ENCODE measurements at regions of chr9 and their contacts with region 1.

Region 1: GRCh38 chr9:137590462-137591383 is at the start of gene ZMYND19:
- H3K4me3 ChIP-seq: peak within 1 kb of the TSS; percentile 75
- H3K27ac ChIP-seq: peak within 1 kb of the TSS; percentile 75; the same call in 1 of the 2 replicates
- H3K4me1 ChIP-seq: peaks cover 2% of the 10 kb centered on the region; the same call in 1 of the 2 replicates
- CTCF ChIP-seq: peak; percentile 25

Region 2: DNA sequence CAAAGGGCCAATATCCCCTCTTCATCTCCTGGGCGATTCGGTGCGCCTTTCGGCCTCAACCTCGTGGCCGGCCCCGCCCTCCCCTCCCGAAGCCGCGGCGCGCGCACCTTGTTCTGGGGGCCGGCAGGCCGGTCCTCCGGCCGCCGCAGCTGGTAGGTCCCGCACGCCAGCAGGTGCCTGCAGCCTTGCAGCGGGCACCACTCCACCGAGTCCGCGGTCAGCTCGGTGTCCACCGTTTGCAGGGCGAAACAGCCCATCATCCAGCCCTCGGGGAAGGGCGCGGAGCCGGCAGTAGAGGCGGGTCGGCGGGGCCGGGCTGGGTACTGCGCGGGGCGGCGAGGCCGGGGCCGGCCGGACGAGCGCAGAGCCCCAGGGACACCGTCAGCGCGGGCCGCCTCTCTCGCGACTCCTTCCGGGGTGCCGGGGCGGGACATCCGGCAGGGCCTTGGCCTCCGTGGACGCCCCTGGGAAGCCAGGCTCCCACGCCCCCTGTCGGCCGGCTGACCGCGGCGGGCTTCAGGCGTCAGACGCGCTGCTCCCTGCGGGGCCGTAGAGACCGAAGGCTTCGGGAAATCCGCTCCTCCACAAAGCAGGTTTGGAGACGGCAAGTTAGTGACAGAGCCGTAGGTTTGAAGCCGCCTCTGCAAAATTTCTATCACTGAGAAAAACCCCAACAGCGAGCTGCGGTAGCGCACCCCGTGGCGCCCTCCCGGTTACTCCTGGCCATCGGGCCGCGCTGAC is 12.0 kb before region 1 on chr9 and contains the start of gene DPH7:
- CTCF ChIA-PET with region 1: interaction called, 24 read pairs
- POLR2A ChIA-PET with region 1: interaction called, 26 read pairs
- H3K4me3 ChIP-seq: peak within 1 kb of the TSS; percentile 95
- H3K27ac ChIP-seq: peak within 1 kb of the TSS; percentile 84
- H3K4me1 ChIP-seq: no peaks in the 10 kb centered on the region; the same call in 1 of the 2 replicates
- CTCF ChIP-seq: peak; percentile 97

Region 3: DNA sequence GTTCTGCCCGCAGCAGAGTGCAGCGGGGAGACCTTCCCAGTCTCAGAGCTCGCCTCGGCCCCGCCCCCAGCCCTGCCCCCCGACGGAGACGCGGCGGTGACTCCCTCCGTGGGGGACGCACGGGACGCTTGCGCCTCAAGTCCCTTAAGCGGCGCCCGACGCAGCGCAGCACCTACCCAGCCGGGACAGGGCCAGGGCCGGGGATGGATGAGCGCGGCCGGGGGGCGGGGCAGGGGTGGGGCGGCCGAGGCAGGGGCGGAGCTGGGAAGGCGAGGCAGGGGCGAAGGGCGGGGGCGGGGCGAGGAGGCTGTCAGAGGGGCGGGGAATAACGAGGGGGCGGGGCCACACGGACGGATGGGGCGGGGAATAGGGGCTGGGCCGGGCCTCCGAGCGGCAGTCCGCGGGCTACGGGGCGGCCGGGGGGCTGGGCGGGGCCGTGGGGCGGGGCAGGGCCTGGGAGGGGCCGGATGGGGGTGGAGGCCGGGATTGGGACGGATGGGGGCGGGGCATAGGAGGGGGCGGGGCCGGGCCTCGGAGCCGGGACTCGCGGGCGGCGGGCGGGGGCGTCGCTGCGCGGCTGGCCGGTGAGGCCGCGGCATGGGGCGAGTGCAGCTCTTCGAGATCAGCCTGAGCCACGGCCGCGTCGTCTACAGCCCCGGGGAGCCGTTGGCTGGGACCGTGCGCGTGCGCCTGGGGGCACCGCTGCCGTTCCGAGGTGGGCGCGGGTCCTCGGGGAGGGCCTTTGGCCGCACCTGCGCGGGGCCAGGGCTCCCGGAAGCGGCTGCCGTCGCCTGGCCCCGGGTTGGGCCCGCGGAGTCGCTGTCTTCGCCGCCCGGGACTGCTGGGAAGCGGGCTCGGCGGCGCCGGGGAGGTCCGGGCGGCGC is 14.6 kb after region 1 on chr9 and contains the start of gene ARRDC1:
- CTCF ChIA-PET with region 1: interaction called, 3 read pairs
- POLR2A ChIA-PET with region 1: interaction called, 43 read pairs
- H3K4me3 ChIP-seq: peak within 1 kb of the TSS; percentile 66
- H3K27ac ChIP-seq: peak within 1 kb of the TSS; percentile 72; the same call in 1 of the 2 replicates
- H3K4me1 ChIP-seq: no peaks in the 10 kb centered on the region
- CTCF ChIP-seq: no peak

Region 4: GRCh38 chr9:137611623-137612463 is 21.1 kb after region 1 on chr9:
- CTCF ChIA-PET with region 1: interaction called, 3 read pairs
- POLR2A ChIA-PET with region 1: interaction called, 11 read pairs
- H3K4me3 ChIP-seq: no peak overlapping the region
- H3K27ac ChIP-seq: peak overlapping the region; percentile 52
- H3K4me1 ChIP-seq: peaks cover 6% of the 10 kb centered on the region; the same call in 1 of the 2 replicates
- CTCF ChIP-seq: no peak

Region 5: DNA sequence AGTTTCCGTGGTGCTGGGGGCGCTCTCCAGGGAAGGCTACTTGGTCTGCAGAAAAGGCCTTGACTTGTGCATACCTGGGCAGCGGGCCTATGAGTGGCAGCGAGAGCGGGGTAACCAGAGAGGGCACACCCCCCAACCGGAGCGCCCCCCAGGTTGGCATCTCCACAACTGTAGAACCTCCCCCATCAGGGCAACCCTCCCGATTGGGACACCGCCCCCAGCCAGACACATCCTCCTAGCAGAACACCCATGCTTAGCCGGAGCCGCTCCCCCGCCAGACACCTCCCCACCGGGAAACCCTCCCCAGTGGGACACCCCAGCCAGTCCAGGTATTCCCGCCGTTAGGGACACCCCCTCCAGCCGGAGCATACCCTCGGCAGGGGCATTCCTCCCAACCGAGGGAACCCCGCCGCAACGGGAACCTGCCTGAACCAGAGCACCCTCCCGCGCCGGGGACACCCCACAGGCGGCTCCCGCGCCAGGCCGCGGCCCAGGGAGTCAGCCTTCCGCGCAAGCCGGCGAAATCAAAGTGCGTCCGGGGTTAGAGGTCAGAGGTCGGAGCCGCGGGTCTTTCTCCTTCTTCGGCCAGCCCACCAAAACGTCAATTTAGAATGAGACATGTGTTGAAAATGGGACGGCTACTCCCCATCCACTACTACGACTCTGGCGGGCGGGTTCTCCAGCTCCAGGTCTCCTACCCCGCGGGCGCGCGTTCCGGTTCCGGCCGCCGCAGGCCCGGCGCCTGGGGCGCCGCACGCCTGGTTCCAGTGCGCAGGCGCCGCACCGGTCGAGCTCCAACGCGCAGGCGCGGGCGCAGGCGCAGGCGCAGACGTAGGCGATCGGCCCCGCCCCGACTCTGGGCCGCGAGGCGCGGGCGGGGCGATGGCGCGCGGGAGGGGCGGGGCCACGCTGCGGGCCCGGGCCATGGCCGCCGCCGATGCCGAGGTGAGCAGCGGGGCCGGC is 27.7 kb after region 1 on chr9 and contains the start of gene EHMT1:
- CTCF ChIA-PET with region 1: interaction called, 3 read pairs
- POLR2A ChIA-PET with region 1: interaction called, 24 read pairs
- H3K4me3 ChIP-seq: peak within 1 kb of the TSS; percentile 90
- H3K27ac ChIP-seq: peak within 1 kb of the TSS; percentile 91
- H3K4me1 ChIP-seq: no peaks in the 10 kb centered on the region
- CTCF ChIP-seq: peak; percentile 57

Region 6: GRCh38 chr9:137632230-137633161 is 41.8 kb after region 1 on chr9:
- CTCF ChIA-PET with region 1: no interaction called
- POLR2A ChIA-PET with region 1: no interaction called
- H3K4me3 ChIP-seq: no peak overlapping the region
- H3K27ac ChIP-seq: no peak overlapping the region
- H3K4me1 ChIP-seq: peaks cover 11% of the 10 kb centered on the region
- CTCF ChIP-seq: no peak